ENCODE measurements at regions of chr1 and their contacts with region 1.

Region 1: GRCh38 chr1:39653546-39654031 is 14.1 kb upstream of the HEYL start:
- DNase-seq: peak; percentile 46 to 89
- H3K4me3 ChIP-seq: no peak overlapping the region
- H3K27ac ChIP-seq: no peak overlapping the region
- H3K4me1 ChIP-seq: peaks cover 0 to 5% of the 10 kb centered on the region in 2 donors
- H3K27me3 ChIP-seq: no peaks in the 10 kb centered on the region
- CTCF ChIP-seq: peak; percentile 92 to 94 (median 93)

Region 2: DNA sequence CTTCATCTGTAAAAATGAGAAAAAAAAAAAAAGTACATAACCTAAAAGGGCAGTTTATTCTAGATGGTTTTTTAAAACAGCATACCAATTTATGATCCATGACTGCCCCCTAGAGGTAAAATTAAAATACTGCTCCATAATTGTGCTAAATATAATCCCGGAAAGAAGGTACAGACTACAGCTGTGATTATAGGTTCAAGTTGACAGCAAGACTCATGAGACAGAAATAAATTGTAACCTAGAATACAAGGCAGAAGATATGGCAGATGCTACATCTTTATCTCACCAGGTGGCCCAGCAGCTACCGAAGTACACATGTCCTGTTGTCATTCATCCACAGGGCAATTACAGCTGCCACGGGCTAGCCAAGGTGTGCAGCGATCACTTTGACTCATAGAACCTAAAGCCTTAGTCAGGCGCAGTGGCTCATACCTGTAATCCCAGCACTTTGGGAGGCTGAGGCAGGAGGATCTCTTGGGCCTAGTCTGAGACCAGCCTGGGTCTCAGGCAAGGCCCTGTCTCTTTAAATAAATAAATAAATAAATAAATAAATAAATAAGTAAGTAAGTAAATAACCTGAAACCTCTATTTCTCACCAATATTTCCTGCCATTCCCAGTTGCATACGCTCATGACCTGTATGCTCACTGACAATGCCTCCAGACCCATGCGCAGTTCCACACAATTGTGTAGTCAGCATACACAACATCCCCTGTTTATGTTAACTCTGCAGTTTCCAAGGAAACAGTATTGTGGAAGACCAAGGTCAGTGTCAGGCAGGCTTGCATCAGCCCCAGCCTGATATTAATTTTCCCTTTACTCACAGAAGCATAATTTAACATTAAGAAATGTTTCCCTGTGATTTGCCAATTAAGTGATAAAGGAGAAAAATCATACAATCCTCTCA is 66.8 kb after region 1 on chr1:
- intact Hi-C with region 1: loop called (anchors 5 kb)
- DNase-seq: no peak
- H3K4me3 ChIP-seq: no peak overlapping the region
- H3K27ac ChIP-seq: no peak overlapping the region
- H3K4me1 ChIP-seq: no peaks in the 10 kb centered on the region
- H3K27me3 ChIP-seq: no peaks in the 10 kb centered on the region
- CTCF ChIP-seq: peak; percentile 55 to 70 (median 70)

Region 3: GRCh38 chr1:39954816-39955546 is 301.4 kb after region 1 on chr1 and contains the start of gene MFSD2A:
- intact Hi-C with region 1: no loop called
- DNase-seq: peak; percentile 64 to 95
- H3K4me3 ChIP-seq: peak within 1 kb of the TSS; percentile 60 to 70
- H3K27ac ChIP-seq: peak within 1 kb of the TSS; percentile 41 to 42
- H3K4me1 ChIP-seq: peaks cover 2 to 12% of the 10 kb centered on the region in 2 donors
- H3K27me3 ChIP-seq: no peaks in the 10 kb centered on the region
- CTCF ChIP-seq: no peak
- total RNA-seq, gene MFSD2A: 0.32 TPM

Region 4: GRCh38 chr1:40059338-40059959 is 405.9 kb after region 1 on chr1:
- intact Hi-C with region 1: no loop called
- DNase-seq: no peak
- H3K4me3 ChIP-seq: peak overlapping the region in 1 of 2 donors; percentile 1
- H3K27ac ChIP-seq: peak overlapping the region; percentile 36
- H3K4me1 ChIP-seq: peaks cover 15 to 47% of the 10 kb centered on the region in 2 donors
- H3K27me3 ChIP-seq: no peaks in the 10 kb centered on the region
- CTCF ChIP-seq: no peak